Posterior cingulate gyrus (tissue), 11 donors: ENCODE measurements at regions of chr12 and their contacts with region 1.

Region 1: GRCh38 chr12:3299929-3300832 is 190.8 kb upstream of the PRMT8 start:
- DNase-seq: peak; percentile 80 to 98 (median 92)

Region 2: GRCh38 chr12:3236345-3237187 is 63.6 kb before region 1 on chr12:
- intact Hi-C with region 1: no loop called
- DNase-seq: no peak

Region 3: GRCh38 chr12:3350422-3350821 is 50.2 kb after region 1 on chr12:
- intact Hi-C with region 1: no loop called
- DNase-seq: no peak

Region 4: DNA sequence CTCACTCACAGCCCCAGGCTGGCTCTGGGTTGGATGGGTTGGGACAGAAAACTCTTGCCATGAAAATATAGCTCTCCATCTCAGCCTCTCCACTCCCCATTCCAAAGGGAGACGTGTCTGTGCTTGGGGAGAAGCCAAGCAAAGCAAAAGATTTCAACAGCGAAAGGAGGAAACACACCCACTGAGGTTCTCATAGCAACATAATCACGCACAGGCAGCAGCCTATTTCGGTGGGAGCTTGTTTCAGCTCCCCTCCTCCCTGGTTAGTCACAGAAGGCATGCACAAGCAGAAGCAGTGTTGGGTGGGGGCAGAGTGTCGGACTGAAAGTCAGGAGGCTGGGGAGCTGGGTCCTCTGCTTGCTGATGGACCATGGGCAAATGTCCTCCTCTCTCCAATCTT is 188.9 kb after region 1 on chr12:
- intact Hi-C with region 1: loop called (anchors 10 kb)
- DNase-seq: peak in 6 of 10 donors; percentile 34 to 92 (median 72)

Region 5: DNA sequence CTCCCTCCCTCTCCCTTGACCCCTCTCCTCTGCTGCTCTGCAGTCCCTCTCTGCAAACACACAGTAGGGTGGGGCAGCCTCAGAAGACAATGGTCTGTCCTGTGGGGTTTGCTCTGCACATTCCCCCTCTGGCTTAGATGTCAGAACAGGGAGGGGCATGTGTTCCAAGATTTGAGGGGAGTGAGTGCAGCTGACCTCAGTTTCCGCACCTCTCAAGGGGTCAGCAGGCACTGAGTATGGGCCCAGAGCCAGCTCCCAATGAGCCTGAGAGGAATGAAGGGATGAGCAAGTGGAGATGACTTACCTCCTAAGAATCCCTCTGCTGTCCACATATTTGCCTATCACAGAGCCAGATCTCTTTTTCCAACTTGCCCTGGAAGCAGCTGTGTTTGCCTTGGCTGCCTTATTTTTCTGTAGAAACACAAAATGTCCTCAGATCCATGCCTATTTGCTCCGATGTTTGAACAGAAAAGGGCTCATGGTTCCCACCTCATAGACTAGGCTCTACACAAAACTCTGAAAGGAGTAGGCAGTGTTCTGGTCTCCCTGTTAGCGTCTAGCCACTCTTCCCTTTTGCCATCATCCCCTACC is 341.3 kb after region 1 on chr12:
- intact Hi-C with region 1: loop called (anchors 5 kb)
- DNase-seq: no peak

Region 6: DNA sequence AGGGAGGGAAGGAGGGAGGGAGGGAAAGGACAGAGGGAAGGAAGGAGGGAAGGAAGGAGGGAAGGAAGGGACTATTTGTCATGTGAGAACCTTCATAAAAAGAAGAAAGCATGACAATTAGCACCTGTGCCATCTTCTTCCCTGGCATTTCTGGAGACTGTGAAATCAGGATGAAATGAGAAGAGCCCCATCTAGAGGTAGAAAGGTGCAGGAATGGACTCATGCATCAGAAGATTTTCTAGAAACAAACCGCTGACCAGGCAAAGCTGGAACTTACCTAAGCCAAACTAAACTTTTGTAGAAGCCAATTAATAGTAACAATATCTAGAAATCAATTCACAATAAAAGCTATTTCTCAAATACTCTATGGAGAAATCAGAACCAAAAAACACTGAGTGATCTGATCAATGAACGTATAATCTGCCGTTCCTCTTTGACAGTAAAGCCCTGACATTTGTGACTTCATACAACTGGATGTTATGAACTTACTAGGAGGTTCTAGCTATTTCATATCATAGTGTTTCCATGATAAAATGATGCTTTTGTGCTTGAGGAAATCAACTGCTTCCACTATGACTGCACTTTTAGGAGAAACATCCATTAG is 477.1 kb after region 1 on chr12:
- intact Hi-C with region 1: loop called (anchors 1 kb)
- DNase-seq: no peak

Region 7: DNA sequence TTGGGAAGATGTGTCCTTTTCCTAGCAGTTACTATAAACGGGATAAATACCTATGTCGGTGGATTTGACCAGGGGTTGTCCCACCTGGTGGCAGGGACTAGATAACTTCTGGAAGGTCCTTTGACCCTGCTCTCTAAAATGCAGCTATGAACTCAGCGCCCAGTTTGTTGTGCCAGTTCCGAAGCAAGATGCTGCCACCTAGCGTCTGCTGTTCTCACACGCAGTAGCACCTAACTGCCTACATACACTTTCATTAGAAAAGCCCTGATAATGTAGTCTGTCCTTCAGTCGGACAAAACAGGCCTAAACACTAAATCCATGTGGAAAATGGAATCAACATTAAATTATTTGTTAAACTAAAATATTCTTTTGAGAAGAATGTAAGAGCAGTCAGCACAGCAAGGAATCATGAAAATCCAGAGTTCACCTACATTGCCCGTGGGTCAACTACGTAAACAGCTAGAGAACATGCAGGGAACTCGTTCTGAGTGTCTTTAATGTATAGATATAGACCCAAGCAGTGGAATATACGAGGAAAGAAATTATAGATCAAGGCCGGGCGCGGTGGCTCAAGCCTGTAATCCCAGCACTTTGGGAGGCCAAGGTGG is 503.8 kb after region 1 on chr12:
- intact Hi-C with region 1: loop called (anchors 1 kb)
- DNase-seq: peak; percentile 49 to 95 (median 76)